RWPE1 (cell line): ENCODE measurements at regions of chr7 and their contacts with region 1.

Region 1: GRCh38 chr7:38775506-38776175 is 133.3 kb downstream of the VPS41 start:
- DNase-seq: no peak
- H3K27ac ChIP-seq: no peak overlapping the region
- CTCF ChIP-seq: no peak

Region 2: DNA sequence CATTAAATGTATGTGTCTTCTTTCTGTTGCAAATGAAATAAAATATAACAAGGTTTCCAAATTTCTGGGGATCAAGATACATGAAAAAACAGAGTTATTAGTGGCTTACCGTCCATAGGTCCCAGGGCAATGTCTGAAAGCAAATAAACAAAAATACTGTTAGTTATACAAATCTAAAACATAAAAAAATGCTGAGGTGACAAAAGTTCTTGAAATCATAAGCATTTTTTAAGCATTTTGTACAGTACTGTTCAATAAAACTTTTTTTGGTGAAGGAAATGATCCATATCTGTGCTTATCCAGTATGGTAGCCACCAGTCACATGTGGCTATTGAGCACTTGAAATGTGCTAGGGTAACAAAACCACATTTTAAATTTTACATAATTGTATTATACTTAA is 343.6 kb before region 1 on chr7:
- CTCF ChIA-PET with region 1: no interaction called
- POLR2A ChIA-PET with region 1: interaction called, 10 read pairs
- DNase-seq: no peak
- H3K27ac ChIP-seq: no peak overlapping the region
- CTCF ChIP-seq: no peak

Region 3: DNA sequence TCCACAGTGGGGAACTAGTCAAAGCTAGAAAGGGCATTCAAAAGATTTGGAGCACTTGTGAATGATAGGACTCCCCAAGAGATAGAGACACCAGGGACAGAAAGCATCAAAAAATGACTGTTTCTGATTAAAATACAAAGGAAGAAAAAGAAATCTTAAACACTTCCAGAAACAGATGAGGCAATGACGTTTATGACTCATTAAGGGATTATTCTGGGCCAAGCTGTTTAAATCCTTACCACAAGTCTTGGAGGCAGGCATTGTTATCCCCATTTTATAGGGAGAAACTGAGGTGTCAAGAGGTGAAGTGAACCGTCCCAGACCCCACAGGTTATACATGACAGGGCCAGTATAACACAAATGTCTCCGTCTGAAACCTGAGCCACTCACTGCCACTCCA is 76.2 kb before region 1 on chr7:
- CTCF ChIA-PET with region 1: no interaction called
- POLR2A ChIA-PET with region 1: no interaction called
- DNase-seq: no peak
- H3K27ac ChIP-seq: no peak overlapping the region
- CTCF ChIP-seq: no peak

Region 4: DNA sequence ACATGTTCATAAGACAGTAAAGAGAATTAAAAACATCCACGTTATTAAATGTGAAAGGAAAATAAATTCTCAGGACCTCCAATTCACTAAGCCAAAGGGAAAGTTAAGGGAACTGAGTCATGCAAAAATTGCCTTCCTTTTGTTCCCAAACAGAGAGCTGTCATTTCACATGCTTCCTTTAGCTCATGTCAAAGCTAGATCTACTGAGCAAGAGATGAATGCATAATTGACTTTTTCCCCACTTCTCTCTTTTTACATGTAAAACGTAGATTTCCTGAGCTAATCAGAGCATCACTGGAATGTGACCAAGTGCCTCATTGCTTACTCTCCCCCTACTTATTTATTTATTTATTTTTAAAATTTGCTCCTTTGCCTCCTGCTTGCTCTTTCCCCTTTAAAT is 15.4 kb before region 1 on chr7:
- CTCF ChIA-PET with region 1: no interaction called
- POLR2A ChIA-PET with region 1: no interaction called
- DNase-seq: no peak
- H3K27ac ChIP-seq: no peak overlapping the region
- CTCF ChIP-seq: no peak